Activated naive CD8-positive, alpha-beta T cell treated with anti-CD3 and anti-CD28 coated beads, Interleukin-2, amount 10 ng/mL, durations not matched to agents 7 days and 5 days (primary cell): ENCODE measurements at regions of chr17 and their contacts with region 1.

Region 1: DNA sequence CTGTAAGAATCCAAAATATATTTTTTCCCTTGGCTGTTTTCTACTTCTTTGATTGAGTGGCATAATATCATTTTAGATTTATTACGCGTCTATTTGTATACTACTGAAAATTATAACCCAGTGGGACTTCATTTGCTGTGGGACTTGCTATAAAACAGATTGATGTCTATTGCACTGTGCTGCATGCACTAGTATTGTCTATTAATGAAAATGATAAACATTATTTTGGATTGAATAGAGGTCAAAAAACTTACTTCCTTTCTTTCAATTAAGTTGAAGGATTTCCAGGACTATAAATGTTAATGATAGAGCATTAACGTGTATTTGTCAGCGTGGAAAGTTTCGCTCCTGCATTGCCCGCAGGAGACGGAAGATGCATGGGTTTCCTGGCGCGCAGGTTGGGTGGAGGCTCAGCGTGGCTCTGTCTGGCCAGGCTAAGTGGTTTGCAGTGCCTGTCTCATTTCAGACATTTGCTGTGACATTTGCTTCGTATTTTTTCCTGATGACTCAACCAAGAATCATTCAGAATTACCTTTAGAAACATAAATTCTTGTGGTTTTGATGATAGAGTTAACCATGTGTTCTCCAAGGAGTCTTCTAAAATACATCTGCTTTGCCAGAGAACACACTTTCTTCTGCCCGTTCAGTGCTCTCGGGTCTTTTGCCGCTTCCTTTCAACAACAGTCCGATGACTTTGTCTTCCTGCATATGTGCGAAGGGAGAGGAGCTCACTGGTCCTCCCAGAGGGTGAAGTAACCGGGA is 216.7 kb downstream of the RPTOR start:
- DNase-seq: no peak
- ATAC-seq: peak; percentile 79
- H3K4me3 Mint-ChIP-seq: peak overlapping the region; percentile 76
- H3K27ac Mint-ChIP-seq: peak overlapping the region; percentile 98
- H3K4me1 Mint-ChIP-seq: peaks cover 66% of the 10 kb centered on the region
- H3K27me3 Mint-ChIP-seq: no peaks in the 10 kb centered on the region

Region 2: DNA sequence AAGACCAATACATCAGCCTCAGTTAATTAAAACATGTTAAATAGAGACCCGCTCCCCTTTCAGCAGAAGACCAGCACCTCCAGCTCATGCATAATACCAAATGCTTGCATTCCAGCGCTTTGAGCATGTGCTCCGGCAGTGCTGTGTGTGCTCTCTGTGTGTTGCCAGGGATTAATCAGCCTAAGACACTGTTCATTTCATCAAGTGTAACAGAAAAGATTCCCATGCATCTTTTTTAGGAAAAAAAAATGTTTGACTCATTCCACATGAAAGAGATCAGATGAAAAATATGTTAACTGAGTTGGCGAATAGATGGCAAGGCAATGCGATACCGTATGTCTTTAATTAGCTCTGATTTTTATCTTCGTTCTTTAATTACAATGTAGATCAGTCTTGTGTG is 29.0 kb before region 1 on chr17:
- POLR2A ChIA-PET with region 1: no interaction called
- DNase-seq: no peak
- ATAC-seq: no peak
- H3K4me3 Mint-ChIP-seq: no peak overlapping the region
- H3K27ac Mint-ChIP-seq: peak overlapping the region; percentile 32
- H3K4me1 Mint-ChIP-seq: peaks cover 39% of the 10 kb centered on the region
- H3K27me3 Mint-ChIP-seq: no peaks in the 10 kb centered on the region

Region 3: DNA sequence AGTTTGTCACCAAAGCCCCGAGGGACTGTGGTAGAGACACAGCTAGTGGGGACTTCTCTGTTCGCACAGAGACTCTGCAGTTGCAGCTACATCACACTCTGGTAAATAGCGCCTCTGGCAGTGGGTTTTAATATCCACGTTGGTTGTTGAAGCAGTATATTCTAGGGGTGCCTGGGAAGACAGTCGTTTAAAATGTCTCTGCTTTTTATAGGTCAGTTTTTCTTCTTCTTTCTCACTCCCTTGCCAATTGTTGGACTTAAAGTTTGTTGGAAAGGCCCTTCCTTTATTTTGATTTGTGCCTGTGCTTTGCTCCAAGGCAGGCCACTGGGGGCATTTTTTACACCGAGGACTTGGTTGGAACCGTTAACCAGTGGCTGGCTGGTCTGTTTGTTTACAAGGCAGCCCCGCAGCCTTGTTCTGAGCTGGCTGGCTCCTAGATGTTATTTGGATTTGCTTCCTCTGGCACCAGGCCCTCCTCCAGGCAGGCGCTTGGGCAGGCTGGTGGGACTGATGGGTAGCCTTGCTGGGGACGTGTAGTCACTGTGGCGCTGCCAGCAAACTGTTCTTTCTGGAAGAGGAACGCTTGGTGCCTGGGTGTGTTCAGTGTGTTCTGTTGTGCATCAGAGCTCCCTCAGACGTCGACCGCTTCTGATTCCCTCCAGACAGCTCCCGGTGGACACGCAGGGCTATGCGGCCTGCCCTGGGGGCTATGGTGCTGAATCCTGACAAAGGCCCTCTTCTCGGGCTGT is 12.1 kb after region 1 on chr17:
- POLR2A ChIA-PET with region 1: interaction called, 17 read pairs
- DNase-seq: no peak
- ATAC-seq: no peak
- H3K4me3 Mint-ChIP-seq: no peak overlapping the region
- H3K27ac Mint-ChIP-seq: peak overlapping the region; percentile 94
- H3K4me1 Mint-ChIP-seq: peaks cover 57% of the 10 kb centered on the region
- H3K27me3 Mint-ChIP-seq: no peaks in the 10 kb centered on the region